ENCODE measurements at regions of chr12 and their contacts with region 1.

Region 1: DNA sequence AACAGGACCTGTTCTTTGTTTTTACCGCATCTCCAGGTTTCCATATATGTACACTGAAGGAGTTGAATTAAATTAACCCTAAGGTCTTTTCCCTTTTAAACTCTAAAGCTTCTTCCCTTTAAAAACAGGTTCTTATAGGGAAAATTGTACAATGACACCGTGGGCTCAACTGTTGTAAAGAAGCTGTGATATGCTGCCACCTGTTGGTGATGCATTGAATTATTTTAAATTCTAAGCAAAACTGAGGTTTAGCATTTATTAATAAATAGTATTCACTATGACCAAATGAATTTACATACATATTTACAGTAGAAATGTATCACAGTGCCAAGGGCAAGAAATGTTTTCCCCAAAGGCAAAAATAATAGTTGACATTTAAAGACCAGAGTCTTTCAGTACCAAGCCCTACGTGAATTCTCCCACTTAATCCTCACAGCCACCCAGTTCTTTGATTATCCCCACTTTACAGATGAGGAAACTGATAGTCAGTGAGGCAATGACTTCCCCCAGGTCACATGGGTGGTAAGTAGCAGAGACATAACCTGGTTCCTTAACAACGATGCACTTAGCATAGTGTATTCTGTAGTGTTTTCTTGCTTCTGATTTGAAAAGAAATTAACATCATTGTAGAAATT is 35.7 kb upstream of the TMEM263 start:
- H3K4me3 ChIP-seq: no peak overlapping the region
- H3K27ac ChIP-seq: no peak overlapping the region
- H3K4me1 ChIP-seq: no peaks in the 10 kb centered on the region
- CTCF ChIP-seq: peak; percentile 44; the same call in 1 of the 2 replicates

Region 2: DNA sequence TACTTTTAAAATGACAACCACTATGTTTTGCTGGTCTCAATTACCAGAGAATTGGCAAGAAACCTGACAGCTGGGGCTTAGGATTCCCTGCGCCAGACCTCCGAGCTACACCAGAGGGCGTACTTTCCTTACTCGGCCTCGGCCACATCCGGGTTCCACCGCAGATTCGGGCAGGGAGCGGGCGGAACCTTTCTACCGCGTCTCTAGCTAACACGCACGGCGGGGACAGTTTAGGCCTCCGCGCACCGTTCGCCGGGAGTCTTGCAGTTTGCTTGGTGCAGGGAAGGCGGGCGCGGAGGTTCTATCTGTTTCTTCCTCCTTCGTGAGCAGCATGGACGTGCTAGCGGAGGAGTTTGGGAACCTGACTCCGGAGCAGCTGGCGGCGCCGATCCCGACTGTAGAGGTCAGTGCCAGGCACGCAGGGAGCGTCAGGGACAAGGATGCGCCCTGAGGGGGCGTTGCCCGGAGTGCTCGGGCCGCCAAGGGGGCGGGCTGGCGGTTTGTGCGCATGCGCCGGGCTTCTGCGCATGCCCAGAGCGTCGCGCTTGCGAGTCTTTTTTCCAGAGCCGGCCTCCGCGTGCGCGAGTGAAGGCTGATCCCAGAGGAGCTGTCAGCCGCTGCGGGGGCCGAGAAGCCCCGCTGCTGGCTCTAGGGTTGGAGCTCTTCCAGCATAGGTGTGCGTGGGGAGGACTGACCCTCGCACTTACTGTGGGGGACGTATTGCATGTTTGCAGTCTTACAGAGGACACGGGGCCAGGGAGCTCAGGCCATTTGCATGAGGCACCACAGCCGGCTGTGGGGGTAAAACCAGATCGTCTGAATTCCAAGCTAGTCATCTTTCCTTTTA is 562.3 kb before region 1 on chr12 and contains the start of gene POLR3B:
- CTCF ChIA-PET with region 1: interaction called, 22 read pairs
- POLR2A ChIA-PET with region 1: interaction called, 4 read pairs
- H3K4me3 ChIP-seq: peak within 1 kb of the TSS; percentile 98
- H3K27ac ChIP-seq: peak within 1 kb of the TSS; percentile 74
- H3K4me1 ChIP-seq: no peaks in the 10 kb centered on the region
- CTCF ChIP-seq: peak; percentile 96

Region 3: DNA sequence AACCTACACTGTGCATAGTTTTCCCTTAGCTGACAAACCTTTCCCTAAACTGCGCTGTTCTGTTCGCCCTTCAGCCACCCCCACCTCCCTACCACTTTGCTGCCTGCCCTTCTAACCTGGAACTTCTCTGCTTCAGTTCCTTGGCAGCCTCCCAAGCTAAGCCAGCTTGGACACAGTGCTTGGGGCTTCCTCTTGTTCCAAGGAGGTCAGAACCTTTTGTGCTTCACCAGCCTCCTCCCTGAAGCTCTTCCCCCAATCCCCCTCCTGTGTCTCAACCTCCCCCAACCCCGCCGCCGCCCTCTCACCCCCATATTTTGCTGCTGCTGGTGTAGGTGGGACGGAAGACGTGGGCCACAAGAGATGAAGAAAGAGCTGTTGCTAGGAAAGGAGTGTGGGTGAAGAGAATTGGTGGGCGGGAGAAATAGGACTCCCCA is 153.6 kb before region 1 on chr12:
- CTCF ChIA-PET with region 1: interaction called, 12 read pairs
- POLR2A ChIA-PET with region 1: no interaction called
- H3K4me3 ChIP-seq: no peak overlapping the region
- H3K27ac ChIP-seq: no peak overlapping the region
- H3K4me1 ChIP-seq: peaks cover 17% of the 10 kb centered on the region
- CTCF ChIP-seq: no peak

Region 4: GRCh38 chr12:106893451-106893850 is 26.6 kb before region 1 on chr12:
- CTCF ChIA-PET with region 1: interaction called, 11 read pairs
- POLR2A ChIA-PET with region 1: no interaction called
- H3K4me3 ChIP-seq: no peak overlapping the region
- H3K27ac ChIP-seq: no peak overlapping the region
- H3K4me1 ChIP-seq: peaks cover 6% of the 10 kb centered on the region; the same call in 1 of the 2 replicates
- CTCF ChIP-seq: no peak

Region 5: DNA sequence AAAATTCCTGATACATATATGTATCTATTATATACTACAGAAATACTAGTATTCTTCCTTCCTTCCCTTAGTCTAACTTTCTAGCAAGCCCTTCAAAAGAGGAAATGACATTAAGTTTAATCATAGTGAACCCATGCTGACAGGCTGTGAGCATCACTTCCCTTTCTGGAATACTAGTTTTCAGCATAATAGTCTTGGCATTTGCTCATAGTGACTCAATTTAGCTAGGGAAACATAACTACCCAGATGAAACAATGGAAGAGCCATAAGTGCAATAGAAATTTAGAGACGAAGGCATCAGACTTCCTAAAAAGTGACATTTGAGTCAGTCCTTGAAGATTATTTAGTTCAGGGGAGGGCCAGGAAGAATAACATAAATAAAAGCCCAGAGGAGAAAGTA is 357.8 kb after region 1 on chr12:
- CTCF ChIA-PET with region 1: no interaction called
- POLR2A ChIA-PET with region 1: no interaction called
- H3K4me3 ChIP-seq: no peak overlapping the region
- H3K27ac ChIP-seq: no peak overlapping the region
- H3K4me1 ChIP-seq: no peaks in the 10 kb centered on the region
- CTCF ChIP-seq: no peak